K562 (cell line): ENCODE measurements at regions of chr1 and their contacts with region 1.

Region 1: GRCh38 chr1:27609210-27609555 is 5.2 kb upstream of the AHDC1 start:
- DNase-seq: no peak
- ATAC-seq: no peak
- H3K4me3 ChIP-seq: no peak overlapping the region
- H3K27ac ChIP-seq: no peak overlapping the region
- H3K4me1 ChIP-seq: peaks cover 26 to 37% of the 10 kb centered on the region in 2 experiments
- H3K27me3 ChIP-seq: peaks cover 9 to 34% of the 10 kb centered on the region in 2 experiments; a peak in 3 of 5 replicates
- CTCF ChIP-seq: no peak
- EP300 ChIP-seq: no peak
- POLR2A ChIP-seq: no peak
- RAD21 ChIP-seq: no peak

Region 2: GRCh38 chr1:27538793-27539192 is 70.4 kb before region 1 on chr1:
- CTCF ChIA-PET with region 1: no interaction called
- POLR2A ChIA-PET with region 1: no interaction called
- in situ Hi-C with region 1: no loop called
- intact Hi-C with region 1: no loop called
- DNase-seq: peak in 2 of 4 experiments; percentile 61 to 71
- ATAC-seq: no peak
- H3K4me3 ChIP-seq: no peak overlapping the region
- H3K27ac ChIP-seq: no peak overlapping the region; the same call in 2 of the 3 replicates
- H3K4me1 ChIP-seq: peaks cover 54 to 69% of the 10 kb centered on the region in 2 experiments
- H3K27me3 ChIP-seq: no peaks in the 10 kb centered on the region
- CTCF ChIP-seq: no peak
- EP300 ChIP-seq: no peak
- POLR2A ChIP-seq: no peak
- RAD21 ChIP-seq: no peak

Region 3: GRCh38 chr1:27643701-27644625 is 34.8 kb after region 1 on chr1:
- CTCF ChIA-PET with region 1: interaction called, 15 read pairs
- POLR2A ChIA-PET with region 1: no interaction called
- in situ Hi-C with region 1: no loop called
- intact Hi-C with region 1: no loop called
- DNase-seq: peak; percentile 70 to 78 (median 74)
- ATAC-seq: peak; percentile 95
- H3K4me3 ChIP-seq: no peak overlapping the region
- H3K27ac ChIP-seq: no peak overlapping the region
- H3K4me1 ChIP-seq: peaks cover 0 to 8% of the 10 kb centered on the region in 2 experiments; a peak in 3 of 5 replicates
- H3K27me3 ChIP-seq: no peaks in the 10 kb centered on the region
- CTCF ChIP-seq: peak; percentile 80 to 93 (median 84)
- EP300 ChIP-seq: no peak
- POLR2A ChIP-seq: no peak
- RAD21 ChIP-seq: peak; percentile 38 to 69